Posterior cingulate gyrus (tissue), 11 donors: ENCODE measurements at regions of chr13 and their contacts with region 1.

Region 1: DNA sequence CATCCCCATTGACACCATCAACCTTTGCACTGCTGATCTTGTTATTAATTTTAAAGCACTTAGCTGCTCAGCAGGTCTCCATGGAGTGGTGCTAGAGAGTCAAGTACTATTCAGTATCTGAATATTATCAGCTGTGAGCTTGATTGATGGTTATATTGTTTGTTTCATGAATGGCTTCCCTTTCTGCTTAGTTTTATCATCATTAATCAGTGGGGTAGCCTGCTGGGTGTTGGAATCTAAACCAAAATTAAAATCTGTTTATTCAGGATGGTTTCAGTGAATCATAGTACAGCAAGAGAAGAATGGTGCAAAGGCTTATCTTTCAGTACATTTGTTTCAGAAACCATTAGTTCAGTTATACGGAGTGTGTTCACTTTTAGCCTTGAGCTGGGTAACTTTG is 42.5 kb upstream of the SCEL start:
- DNase-seq: peak in 1 of 10 donors; percentile 11

Region 2: GRCh38 chr13:76868371-76868770 is 624.6 kb before region 1 on chr13:
- intact Hi-C with region 1: no loop called
- DNase-seq: no peak

Region 3: DNA sequence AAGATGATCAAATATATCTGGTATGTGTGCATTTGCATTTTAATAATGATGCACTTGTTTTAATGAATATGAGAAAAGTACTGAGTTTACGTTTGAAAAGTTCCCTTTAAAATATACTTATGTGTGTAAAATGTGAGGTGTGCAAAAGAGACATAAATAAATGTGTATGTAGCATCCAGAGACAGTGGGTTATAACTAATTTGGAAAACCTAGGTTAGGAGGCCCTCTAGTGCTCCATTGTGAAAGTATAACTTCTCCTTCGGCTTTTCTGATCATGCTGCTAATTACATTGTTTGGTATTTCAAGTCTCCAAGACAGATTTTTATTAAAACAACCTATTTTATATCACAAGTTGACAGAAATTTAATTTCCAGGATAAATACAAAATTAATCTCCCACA is 72.7 kb after region 1 on chr13:
- intact Hi-C with region 1: loop called (anchors 2 kb)
- DNase-seq: no peak

Region 4: DNA sequence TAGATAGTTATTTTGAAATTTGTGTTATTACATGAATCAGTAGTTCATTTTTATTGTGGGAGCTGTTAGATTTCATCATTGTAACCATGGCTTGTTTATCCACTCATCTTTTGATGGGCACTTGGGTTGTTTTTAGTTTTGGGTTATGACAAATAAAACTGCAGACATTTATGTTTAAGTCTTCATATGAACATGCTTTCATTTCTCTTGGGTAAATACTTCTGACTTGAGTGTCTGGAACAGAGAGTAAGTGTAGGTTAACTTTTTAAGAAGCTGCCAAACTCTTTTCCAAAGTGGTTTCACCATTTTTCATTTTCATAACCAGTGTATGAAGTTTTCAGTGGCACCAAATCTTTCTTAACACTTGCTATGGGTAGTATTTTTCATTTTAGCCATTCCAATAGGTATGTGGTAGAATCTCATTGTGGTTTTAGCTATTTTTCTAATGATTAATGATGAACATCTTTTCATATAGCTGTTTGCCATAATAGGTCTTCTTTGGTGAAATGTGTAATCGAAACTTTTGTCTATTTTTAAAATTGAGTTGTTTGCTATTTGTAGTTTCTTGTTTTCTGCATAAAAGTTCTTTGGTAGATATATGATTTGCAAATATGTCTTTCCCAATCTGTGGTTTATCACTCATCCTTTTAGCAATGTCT is 222.4 kb after region 1 on chr13:
- intact Hi-C with region 1: no loop called
- DNase-seq: no peak

Region 5: GRCh38 chr13:77751513-77752456 is 258.8 kb after region 1 on chr13:
- intact Hi-C with region 1: loop called (anchors 5 kb)
- DNase-seq: peak in 1 of 10 donors; percentile 51

Region 6: GRCh38 chr13:77836423-77836822 is 343.4 kb after region 1 on chr13:
- intact Hi-C with region 1: no loop called
- DNase-seq: no peak

Region 7: DNA sequence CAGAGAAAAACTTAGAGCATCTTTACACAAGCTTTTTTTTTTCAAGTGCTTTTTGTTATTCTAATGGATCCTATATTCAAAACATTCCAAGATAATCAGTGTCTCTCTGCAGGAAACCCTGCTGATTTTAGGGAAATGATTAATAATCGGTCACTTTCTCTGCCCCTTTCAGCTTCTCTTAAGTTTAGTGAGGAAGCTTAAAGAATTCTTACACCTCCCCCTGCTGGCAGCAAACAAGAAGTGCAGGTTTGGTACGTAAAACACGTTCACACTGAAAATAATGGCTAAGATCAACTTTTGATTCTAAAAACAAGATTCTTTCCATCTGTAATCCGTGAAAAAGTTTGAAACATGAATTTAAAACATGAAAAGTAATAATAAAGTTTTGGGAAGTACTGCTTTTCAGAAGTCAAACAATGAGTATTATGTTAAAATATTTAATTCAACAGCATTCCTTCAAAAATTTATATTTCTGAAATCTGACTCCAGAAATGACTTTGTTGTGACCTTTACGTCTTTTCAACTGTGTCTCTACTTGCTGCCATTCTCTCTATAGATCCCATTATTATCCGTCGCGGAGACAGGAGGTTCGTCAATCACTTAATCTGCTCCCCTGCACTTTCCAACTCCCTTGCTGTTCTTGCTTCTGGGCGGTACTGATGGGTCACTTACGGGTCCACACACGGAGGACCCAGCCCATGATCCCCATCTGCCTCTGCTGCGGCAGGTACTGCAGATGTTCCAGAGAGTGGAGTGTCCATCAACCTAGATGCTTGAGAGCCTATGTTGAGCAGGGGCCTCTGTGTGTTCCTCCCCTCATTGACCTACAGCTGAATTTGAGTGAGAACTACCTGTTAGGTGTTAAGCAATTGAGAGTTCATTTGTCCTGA is 628.7 kb after region 1 on chr13:
- intact Hi-C with region 1: loop called (anchors 5 kb)
- DNase-seq: peak in 7 of 10 donors; percentile 37 to 79 (median 51)

Region 8: DNA sequence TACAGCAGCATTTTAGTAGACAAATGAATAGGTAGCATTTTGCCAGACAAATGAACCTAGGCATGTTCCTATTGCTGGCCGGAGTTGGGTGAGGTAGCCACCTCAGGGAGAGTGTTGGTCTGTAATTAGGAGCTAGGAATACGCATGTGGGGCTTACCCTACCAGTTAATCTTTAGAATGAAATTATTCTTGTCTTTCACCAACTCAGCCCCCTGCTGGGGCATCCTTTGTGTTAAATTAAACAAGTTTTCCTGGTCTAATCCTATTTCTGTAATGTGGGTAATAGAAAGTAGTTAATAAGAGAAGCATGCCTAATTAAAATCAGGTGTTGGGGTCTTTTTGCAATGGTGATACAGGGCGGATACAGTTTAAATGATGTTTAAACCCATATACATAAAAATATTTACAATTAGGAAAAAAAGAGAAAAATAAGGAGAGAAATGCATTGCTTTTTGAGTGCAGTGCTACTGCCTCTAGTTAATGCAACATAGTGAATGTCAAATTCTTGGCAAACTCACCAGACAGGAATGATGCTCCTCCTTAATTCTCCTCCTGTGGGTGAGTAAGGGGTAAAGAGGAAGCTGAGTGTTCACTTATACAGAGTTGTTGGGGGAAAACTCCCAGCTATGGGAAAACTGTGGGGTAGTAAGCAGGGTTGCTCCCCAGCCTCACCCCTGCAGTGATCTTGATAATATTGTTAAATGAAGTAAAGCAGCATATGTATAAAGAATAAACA is 702.1 kb after region 1 on chr13:
- intact Hi-C with region 1: no loop called
- DNase-seq: no peak